AG04450 (cell line): ENCODE measurements at regions of chr7 and their contacts with region 1.

Region 1: DNA sequence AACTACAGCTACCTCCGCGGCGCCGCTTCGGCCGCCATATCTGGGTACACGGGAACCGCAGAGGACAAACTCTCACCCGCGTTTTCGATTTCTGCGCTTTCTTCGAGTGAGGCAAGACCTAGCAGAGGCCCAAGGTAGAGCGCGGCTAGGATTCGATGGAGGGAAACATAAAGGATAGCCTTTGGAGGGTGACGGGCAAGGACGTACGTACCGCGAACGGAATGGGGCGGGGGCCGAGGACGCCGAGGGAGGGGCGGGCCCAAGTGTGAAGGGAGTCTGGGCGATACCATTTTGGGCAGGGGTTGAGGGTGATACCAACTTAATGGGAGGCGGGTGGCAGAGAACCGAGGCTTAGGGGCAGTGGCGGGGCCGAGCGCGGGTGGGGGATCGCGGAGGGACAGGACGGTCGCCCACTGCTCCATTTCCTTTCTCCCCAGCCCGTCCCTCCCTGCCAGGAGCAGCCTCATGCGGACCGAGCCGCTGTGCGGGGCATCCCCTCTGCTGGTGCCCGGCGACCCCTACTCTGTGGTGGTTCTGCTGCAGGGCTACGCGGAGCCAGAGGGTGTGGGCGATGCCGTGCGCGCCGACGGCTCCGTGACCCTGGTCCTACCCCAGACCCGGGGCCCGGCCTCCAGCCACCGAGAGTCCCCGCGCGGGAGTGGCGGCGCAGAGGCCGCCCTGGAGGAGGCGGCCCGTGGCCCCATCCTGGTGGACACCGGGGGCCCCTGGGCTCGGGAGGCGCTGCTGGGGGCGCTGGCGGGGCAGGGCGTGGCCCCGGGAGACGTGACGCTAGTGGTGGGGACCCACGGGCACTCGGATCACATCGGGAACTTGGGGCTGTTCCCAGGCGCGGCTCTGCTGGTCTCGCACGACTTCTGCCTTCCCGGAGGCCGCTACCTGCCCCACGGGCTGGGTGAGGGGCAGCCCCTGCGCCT is at the start of gene MBLAC1:
- DNase-seq: peak; percentile 87
- H3K4me3 ChIP-seq: peak within 1 kb of the TSS; percentile 96
- H3K27ac ChIP-seq: peak within 1 kb of the TSS; percentile 96
- H3K27me3 ChIP-seq: no peaks in the 10 kb centered on the region
- CTCF ChIP-seq: no peak
- polyA plus RNA-seq, gene MBLAC1: 0.55 and 0.56 TPM in 2 replicates

Region 2: DNA sequence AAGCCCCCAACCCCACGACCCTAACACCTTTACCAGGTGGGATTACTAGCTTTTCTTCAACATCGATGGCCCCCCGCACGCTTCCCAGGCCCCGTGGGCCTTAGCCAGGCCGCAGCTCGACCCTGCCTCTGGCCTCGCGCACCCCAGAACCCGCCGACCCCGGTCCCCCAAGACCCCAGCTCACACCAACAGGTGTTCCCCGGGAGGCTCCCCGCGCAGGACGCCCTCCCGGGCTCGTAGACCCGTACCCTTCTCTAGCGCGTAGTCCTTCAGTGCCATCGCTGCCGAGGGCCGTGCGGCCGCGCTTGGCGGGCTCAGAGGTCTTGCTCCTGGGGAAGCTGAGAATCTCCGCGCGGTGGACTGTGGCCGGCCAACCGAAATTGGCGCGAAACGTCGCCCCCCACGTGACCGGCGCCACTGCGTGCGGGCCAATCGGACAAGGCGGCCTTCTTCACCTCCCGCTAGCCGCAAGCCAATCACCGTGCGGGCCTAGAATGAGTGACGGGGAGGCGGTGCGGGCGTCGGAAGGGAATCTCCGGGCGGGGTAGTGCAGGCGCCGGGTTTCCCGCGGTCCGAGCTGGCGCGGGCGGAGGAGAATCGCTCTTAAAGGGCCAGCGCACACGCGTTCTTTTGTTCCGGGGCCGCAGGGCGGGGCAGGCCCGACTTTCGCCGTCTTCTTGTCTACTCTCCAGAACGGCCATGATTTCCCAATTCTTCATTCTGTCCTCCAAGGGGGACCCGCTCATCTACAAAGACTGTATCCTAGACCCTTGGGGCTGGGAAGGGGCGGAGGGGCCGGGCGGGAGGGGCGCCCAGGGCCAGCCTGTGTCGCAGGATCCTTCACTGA is 26.0 kb before region 1 on chr7 and contains the starts of genes AP4M1 and MCM7:
- CTCF ChIA-PET with region 1: interaction called, 13 read pairs
- POLR2A ChIA-PET with region 1: interaction called, 12 read pairs
- DNase-seq: peak; percentile 98
- H3K4me3 ChIP-seq: peak within 1 kb of the TSS; percentile 77
- H3K27ac ChIP-seq: peak within 1 kb of the TSS; percentile 88
- H3K27me3 ChIP-seq: no peaks in the 10 kb centered on the region
- CTCF ChIP-seq: no peak
- polyA plus RNA-seq, gene AP4M1: 25.4 and 26.1 TPM in 2 replicates
- polyA plus RNA-seq, gene MCM7: 39.5 and 44.2 TPM in 2 replicates

Region 3: DNA sequence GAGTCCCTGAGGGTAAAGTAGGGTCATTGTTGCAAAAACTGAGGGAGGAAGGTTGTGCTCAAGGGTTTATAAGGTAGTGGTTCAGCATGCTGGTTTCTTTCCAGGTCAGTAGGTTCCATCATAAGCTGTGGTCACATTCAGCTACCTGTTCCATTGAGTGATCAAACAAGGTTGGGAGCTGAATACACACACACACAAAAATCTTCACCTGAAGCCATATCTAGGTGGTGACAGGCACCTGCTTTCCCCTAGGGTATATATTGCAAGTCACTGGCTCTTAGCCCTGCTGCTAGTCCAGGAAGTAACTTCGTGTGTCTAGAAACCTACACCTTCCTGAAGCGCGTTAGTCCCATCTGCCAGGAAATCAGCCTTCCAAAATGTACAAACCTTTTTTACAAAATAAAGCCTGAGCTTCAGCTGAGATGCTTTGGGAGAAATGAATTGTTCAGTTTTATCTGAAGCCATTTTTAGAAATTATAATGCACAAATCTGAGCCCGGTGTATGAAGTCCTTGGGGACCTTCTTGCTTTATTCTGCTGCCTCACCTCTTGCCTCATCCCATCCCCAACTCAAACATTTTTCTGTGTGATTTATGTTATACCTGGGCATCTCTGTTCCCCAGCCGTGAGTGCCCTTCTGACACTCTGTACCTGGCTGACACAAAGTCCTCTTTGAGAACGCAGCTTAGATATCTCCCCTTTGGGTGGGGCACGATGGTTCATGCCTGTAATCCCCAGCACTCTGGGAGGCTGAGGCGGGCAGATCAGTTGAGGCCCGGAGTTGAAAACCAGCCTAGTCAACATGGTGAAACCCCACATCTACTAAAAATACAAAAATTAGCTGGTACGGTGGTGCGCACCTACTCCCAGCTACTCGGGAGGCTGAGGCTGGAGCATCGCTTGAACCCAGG is 10.9 kb after region 1 on chr7:
- CTCF ChIA-PET with region 1: interaction called, 30 read pairs
- POLR2A ChIA-PET with region 1: interaction called, 3 read pairs
- DNase-seq: no peak
- H3K4me3 ChIP-seq: no peak overlapping the region
- H3K27ac ChIP-seq: no peak overlapping the region
- H3K27me3 ChIP-seq: peaks cover 3% of the 10 kb centered on the region
- CTCF ChIP-seq: no peak